MCF 10A (cell line): ENCODE measurements at regions of chr3 and their contacts with region 1.

Region 1: DNA sequence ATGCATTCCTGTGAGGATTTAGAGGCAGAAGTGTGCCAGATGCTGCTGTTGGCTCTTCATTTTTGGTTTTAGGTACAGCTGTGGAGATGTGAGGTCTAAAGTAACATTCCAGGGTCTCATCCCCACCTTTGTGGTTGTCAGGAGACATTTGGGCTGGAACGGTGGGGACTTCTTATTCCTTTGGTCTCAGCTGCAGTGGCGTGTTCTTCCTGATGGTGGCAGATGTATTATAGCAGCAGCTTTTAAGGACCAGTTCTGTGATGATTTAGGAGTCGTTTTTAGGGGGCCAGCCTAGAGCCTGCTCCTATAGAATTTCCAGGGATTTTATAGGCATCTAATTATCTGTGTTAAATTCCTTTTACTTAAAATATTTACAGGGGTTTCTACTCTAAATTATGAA is 221.0 kb upstream of the EOMES start:
- DNase-seq: peak; percentile 43
- H3K4me3 Mint-ChIP-seq: no peak overlapping the region
- H3K27ac Mint-ChIP-seq: no peak overlapping the region
- H3K4me1 Mint-ChIP-seq: peaks cover 7% of the 10 kb centered on the region
- H3K27me3 Mint-ChIP-seq: no peaks in the 10 kb centered on the region
- CTCF ChIP-seq: peak; percentile 30

Region 2: GRCh38 chr3:28286595-28286994 is 343.5 kb after region 1 on chr3:
- CTCF ChIA-PET with region 1: no interaction called
- POLR2A ChIA-PET with region 1: no interaction called
- intact Hi-C with region 1: loop called (anchors 5 kb)
- DNase-seq: peak; percentile 52
- H3K4me3 Mint-ChIP-seq: no peak overlapping the region
- H3K27ac Mint-ChIP-seq: no peak overlapping the region
- H3K4me1 Mint-ChIP-seq: peaks cover 13% of the 10 kb centered on the region
- H3K27me3 Mint-ChIP-seq: no peaks in the 10 kb centered on the region
- CTCF ChIP-seq: peak; percentile 39